ENCODE measurements at regions of chrX and their contacts with region 1.

Region 1: DNA sequence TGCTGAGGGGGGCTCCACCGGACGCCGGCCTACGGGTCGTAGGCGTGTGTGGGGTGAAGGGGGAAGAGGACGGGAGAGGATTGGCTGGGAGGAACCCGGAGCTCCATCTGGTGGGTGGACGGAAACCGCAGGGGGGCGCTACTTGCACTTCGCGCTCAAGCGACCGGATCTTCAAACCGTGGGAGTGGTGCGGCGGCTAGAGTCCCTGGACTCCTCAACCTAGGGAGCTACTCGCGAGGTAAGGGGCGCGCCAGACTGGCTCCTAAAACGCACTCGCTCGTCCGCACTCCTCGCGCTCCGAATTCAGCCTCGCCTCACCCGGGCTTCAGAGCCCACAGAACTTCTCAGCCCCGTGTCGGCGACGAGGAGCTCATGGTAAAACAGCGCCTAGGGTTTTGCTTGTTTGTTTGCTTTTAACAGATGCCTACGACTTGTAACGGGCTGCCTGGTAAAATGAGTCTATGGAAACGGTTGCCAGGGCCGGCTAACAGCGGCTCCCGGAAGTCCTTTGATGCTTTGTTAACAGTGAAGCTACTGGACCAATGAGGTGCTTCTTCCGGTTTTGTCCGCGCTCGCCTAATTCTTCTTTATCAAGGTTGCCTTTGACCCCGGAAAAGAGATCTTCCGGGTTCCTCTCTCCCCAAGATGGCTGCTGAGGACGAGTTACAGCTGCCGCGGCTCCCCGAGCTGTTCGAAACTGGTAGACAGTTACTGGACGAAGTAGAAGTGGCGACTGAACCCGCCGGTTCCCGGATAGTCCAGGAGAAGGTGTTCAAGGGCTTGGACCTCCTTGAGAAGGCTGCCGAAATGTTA is at the start of gene IGBP1:
- DNase-seq: peak; percentile 88
- ATAC-seq: peak; percentile 79
- H3K4me3 ChIP-seq: peak within 1 kb of the TSS; percentile 78 to 95 (median 89)
- H3K4me3 Mint-ChIP-seq: peak within 1 kb of the TSS; percentile 99
- H3K27ac ChIP-seq: peak within 1 kb of the TSS; percentile 90 to 95
- H3K27ac Mint-ChIP-seq: peak within 1 kb of the TSS; percentile 97
- H3K4me1 ChIP-seq: peaks cover 16% of the 10 kb centered on the region in 2 donors
- H3K4me1 Mint-ChIP-seq: peaks cover 27% of the 10 kb centered on the region
- H3K27me3 ChIP-seq: no peaks in the 10 kb centered on the region
- H3K27me3 Mint-ChIP-seq: no peaks in the 10 kb centered on the region
- CTCF ChIP-seq: peak; percentile 65
- total RNA-seq, gene IGBP1: 51.8 and 54.7 TPM in 2 replicates

Region 2: DNA sequence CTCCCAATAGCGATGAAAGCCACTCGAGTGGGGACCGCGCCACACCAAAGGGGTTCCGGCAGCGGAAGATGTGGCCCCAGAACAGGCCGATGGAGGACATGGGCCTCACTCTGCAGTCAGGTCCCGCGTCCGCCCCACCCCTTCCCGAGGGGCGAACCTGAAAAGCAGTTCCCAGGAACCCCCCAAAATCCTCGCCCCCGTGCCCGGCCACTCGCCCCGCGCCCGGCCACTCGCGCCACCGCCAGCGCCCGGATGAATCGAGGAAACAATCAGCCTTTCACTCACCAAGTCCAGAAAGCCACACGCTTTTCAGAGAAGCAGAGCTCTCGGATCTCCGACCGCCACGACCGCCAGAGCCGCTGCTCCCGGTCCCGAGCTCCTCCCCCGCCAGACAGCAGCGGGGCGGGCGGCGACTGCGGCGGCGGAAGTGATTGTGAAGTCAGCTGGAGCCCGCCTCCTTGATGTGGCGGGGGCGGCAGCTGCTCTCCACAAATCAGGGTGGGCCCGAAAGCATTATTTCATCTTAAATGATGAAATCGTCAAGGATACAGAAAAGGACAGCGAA is 968.3 kb before region 1 on chrX and contains the start of gene PJA1:
- CTCF ChIA-PET with region 1: interaction called, 5 read pairs
- POLR2A ChIA-PET with region 1: no interaction called
- intact Hi-C with region 1: loop called (anchors 10 kb)
- DNase-seq: peak; percentile 76
- ATAC-seq: peak; percentile 84
- H3K4me3 ChIP-seq: peak within 1 kb of the TSS; percentile 49 to 79 (median 69)
- H3K4me3 Mint-ChIP-seq: peak within 1 kb of the TSS; percentile 94
- H3K27ac ChIP-seq: peak within 1 kb of the TSS; percentile 24 to 70
- H3K27ac Mint-ChIP-seq: peak within 1 kb of the TSS; percentile 93
- H3K4me1 ChIP-seq: peaks cover 0 to 8% of the 10 kb centered on the region in 2 donors
- H3K4me1 Mint-ChIP-seq: peaks cover 16% of the 10 kb centered on the region
- H3K27me3 ChIP-seq: no peaks in the 10 kb centered on the region
- H3K27me3 Mint-ChIP-seq: no peaks in the 10 kb centered on the region
- CTCF ChIP-seq: no peak
- total RNA-seq, gene PJA1: 21.3 and 25.7 TPM in 2 replicates

Region 3: GRCh38 chrX:70289793-70290776 is 156.6 kb after region 1 on chrX and contains the starts of genes KIF4A and PDZD11:
- CTCF ChIA-PET with region 1: interaction called, 4 read pairs
- POLR2A ChIA-PET with region 1: no interaction called
- intact Hi-C with region 1: loop called (anchors 10 kb)
- DNase-seq: peak; percentile 75
- ATAC-seq: peak; percentile 99
- H3K4me3 ChIP-seq: peak within 1 kb of the TSS; percentile 45 to 75 (median 57)
- H3K4me3 Mint-ChIP-seq: peak within 1 kb of the TSS; percentile 89
- H3K27ac ChIP-seq: peak within 1 kb of the TSS; percentile 33 to 53
- H3K27ac Mint-ChIP-seq: peak within 1 kb of the TSS; percentile 78
- H3K4me1 ChIP-seq: peaks cover 10 to 13% of the 10 kb centered on the region in 2 donors
- H3K4me1 Mint-ChIP-seq: peaks cover 20% of the 10 kb centered on the region
- H3K27me3 ChIP-seq: no peaks in the 10 kb centered on the region
- H3K27me3 Mint-ChIP-seq: no peaks in the 10 kb centered on the region
- CTCF ChIP-seq: no peak
- total RNA-seq, gene KIF4A: 0.07 and 0.22 TPM in 2 replicates
- total RNA-seq, gene PDZD11: 12.0 and 13.8 TPM in 2 replicates

Region 4: GRCh38 chrX:70433848-70434351 is 300.4 kb after region 1 on chrX:
- CTCF ChIA-PET with region 1: interaction called, 9 read pairs
- POLR2A ChIA-PET with region 1: interaction called, 3 read pairs
- intact Hi-C with region 1: loop called (anchors 1 kb)
- DNase-seq: peak; percentile 83
- ATAC-seq: peak; percentile 70
- H3K4me3 ChIP-seq: peak overlapping the region; percentile 6 to 82 (median 72)
- H3K4me3 Mint-ChIP-seq: peak overlapping the region; percentile 92
- H3K27ac ChIP-seq: peak overlapping the region; percentile 68
- H3K27ac Mint-ChIP-seq: peak overlapping the region; percentile 93
- H3K4me1 ChIP-seq: peaks cover 9 to 17% of the 10 kb centered on the region in 2 donors
- H3K4me1 Mint-ChIP-seq: peaks cover 19% of the 10 kb centered on the region
- H3K27me3 ChIP-seq: no peaks in the 10 kb centered on the region
- H3K27me3 Mint-ChIP-seq: peaks cover 13% of the 10 kb centered on the region
- CTCF ChIP-seq: peak; percentile 69

Region 5: DNA sequence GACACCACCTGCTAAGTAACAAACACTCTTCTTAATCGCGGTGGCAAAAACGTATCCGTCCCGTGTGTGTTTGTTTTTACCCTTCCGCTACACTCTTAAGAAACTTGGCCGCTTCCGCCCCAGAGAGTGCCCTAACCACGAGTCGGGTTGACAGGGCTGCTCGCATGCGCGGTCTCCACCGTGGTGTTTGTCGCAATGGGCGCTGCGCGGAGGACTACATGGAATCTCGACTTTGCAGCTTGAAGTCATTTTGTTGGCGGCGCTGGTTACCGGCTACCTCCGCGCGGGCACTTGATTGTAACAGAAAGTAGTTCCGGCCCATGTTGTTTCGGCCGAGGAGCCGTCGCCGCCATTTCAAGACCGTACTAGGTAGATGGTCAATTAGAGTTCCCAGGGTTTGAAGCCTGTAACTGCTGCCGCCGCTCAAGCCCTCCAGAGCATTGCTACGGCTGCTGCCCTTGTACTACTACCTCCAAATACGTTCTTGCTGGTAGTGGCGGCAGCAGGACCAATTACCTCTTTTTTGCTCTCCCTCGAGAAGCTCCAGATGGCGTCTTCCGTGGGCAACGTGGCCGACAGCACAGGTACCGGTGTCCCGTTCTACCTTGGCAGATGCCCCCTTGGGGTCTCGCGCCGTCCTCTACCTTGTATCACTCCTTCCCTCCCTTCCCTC is 1399.4 kb after region 1 on chrX and contains the start of gene OGT:
- CTCF ChIA-PET with region 1: no interaction called
- POLR2A ChIA-PET with region 1: no interaction called
- intact Hi-C with region 1: loop called (anchors 10 kb)
- DNase-seq: peak; percentile 95
- ATAC-seq: peak; percentile 85
- H3K4me3 ChIP-seq: peak within 1 kb of the TSS; percentile 75 to 96 (median 86)
- H3K4me3 Mint-ChIP-seq: peak within 1 kb of the TSS; percentile 97
- H3K27ac ChIP-seq: peak within 1 kb of the TSS; percentile 87
- H3K27ac Mint-ChIP-seq: peak within 1 kb of the TSS; percentile 93
- H3K4me1 ChIP-seq: peaks cover 5 to 27% of the 10 kb centered on the region in 2 donors
- H3K4me1 Mint-ChIP-seq: peaks cover 26% of the 10 kb centered on the region
- H3K27me3 ChIP-seq: no peaks in the 10 kb centered on the region
- H3K27me3 Mint-ChIP-seq: no peaks in the 10 kb centered on the region
- CTCF ChIP-seq: no peak
- total RNA-seq, gene OGT: 307 and 330 TPM in 2 replicates